Natural killer cell (primary cell): ENCODE measurements at regions of chr1 and their contacts with region 1.

Region 1: GRCh38 chr1:151839457-151840405 is at the start of gene C2CD4D:
- DNase-seq: peak; percentile 49 to 90
- ATAC-seq: peak; percentile 74 to 79 (median 76)
- H3K4me3 ChIP-seq: peak within 1 kb of the TSS; percentile 47
- H3K4me3 Mint-ChIP-seq: peak within 1 kb of the TSS; percentile 86
- H3K27ac ChIP-seq: peak within 1 kb of the TSS; percentile 57
- H3K27ac Mint-ChIP-seq: peak within 1 kb of the TSS; percentile 75 to 85
- H3K4me1 ChIP-seq: peaks cover 42% of the 10 kb centered on the region
- H3K4me1 Mint-ChIP-seq: peaks cover 33 to 40% of the 10 kb centered on the region in 2 donors
- H3K27me3 ChIP-seq: peaks cover 5% of the 10 kb centered on the region
- H3K27me3 Mint-ChIP-seq: peaks cover 3 to 27% of the 10 kb centered on the region in 2 donors
- CTCF ChIP-seq: no peak
- total RNA-seq, gene C2CD4D: 0.20 to 0.24 TPM in 2 of 3 donors, not detected in the other

Region 2: DNA sequence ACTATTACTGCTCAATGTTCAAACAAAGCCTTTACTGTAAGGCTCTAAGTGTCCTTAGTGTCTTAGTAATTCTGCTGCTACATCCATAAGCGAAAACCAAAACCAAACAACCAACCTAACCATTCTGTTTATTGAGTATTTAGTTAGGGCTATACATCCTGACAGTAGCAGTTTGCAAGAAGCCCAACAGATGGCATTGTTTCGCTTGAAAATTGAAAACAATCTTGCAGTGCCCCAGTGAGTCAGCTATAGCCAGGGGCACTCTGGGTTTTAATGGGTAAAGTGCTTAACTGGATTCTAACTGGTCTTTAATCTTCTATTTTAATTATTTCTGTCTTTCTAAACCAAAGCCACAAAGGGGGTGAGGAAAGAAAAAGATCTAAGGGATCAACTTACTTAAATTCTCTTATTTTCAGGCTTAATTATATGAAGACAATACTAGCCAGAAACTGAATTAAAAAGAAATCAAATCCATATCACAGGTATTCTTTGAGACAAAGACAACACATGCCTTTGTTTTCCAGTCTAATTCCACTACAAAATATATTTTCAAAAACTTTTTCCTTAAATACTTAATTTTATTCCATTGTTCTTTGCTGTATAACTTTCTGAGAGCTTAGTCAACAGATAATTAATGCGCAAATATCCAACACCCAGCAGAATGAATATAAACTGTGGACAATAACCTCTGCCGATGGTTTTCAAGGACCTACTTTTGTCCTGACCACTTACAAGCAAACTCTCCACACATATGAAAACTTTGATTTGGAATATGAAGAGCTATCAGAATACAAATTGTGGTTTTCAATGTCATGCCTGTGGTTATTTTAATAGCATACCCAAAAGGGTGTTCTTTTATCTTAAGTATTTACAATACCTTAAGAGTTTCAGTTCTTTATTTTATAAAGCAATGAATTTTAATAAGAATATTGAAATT is 395.6 kb before region 1 on chr1:
- intact Hi-C with region 1: loop called (anchors 2 kb)
- DNase-seq: peak; percentile 48 to 87
- ATAC-seq: peak; percentile 97 to 100 (median 98)
- H3K4me3 ChIP-seq: no peak overlapping the region
- H3K4me3 Mint-ChIP-seq: no peak overlapping the region
- H3K27ac ChIP-seq: no peak overlapping the region
- H3K27ac Mint-ChIP-seq: no peak overlapping the region
- H3K4me1 ChIP-seq: no peaks in the 10 kb centered on the region
- H3K4me1 Mint-ChIP-seq: peaks cover 24 to 25% of the 10 kb centered on the region in 2 donors
- H3K27me3 ChIP-seq: no peaks in the 10 kb centered on the region
- H3K27me3 Mint-ChIP-seq: no peaks in the 10 kb centered on the region
- CTCF ChIP-seq: peak; percentile 82

Region 3: DNA sequence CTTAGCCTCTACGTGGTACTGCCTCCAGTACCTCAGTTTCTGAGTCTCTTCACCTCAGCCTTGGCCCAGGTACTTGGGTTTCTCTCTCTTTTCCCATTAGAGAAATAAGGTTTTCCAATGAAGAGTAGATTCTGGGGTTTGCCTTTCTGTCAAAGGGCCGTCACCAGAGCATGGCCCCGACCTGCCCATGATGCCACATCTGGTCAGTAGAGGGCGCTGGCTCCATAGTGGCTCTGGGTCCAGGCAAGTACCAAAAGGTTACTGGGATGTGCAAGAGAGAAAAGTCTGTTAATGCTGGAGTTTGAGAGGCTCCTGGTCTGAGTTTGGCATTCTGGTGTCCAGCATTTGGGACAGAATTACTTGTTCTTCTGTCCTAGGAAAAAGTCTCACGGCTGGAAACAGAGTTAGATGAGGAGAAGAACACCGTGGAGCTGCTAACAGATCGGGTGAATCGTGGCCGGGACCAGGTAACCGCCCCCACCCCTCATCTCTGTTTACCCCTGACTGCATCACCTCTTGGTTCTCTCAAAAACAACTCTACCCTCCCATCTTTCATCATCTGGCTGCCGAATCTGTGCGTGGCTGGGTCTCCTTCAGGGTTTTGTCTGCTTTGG is 305.0 kb before region 1 on chr1:
- intact Hi-C with region 1: loop called (anchors 5 kb)
- DNase-seq: peak; percentile 66 to 84
- ATAC-seq: peak; percentile 80 to 93 (median 90)
- H3K4me3 ChIP-seq: no peak overlapping the region
- H3K4me3 Mint-ChIP-seq: no peak overlapping the region
- H3K27ac ChIP-seq: no peak overlapping the region
- H3K27ac Mint-ChIP-seq: no peak overlapping the region
- H3K4me1 ChIP-seq: peaks cover 6% of the 10 kb centered on the region
- H3K4me1 Mint-ChIP-seq: peaks cover 0 to 3% of the 10 kb centered on the region in 2 donors
- H3K27me3 ChIP-seq: no peaks in the 10 kb centered on the region
- H3K27me3 Mint-ChIP-seq: no peaks in the 10 kb centered on the region
- CTCF ChIP-seq: peak; percentile 80

Region 4: DNA sequence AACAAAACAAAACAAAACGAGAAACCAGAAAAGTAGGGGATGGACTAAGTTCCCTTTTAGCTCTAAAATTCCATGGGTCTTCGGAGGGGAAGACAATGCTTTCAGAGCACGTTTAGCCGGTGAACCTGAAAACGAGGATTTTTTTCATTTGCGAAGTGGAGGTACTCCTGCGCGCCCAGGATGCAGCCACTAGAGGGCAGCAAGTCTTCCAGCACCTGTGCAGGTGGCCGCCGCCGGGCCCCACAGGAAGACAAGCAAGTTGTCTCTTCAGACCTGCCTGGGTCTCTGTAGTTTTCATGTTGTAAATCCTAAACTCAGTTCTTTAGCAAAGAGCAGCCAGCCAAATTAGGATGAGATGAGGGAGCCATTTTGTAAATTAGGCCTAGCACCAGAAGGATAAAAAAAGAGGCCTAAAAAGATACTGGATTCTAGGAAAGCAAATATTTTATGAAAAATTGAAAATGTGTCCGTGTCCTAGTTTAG is 245.5 kb before region 1 on chr1:
- intact Hi-C with region 1: loop called (anchors 1 kb)
- DNase-seq: peak; percentile 68 to 92
- ATAC-seq: peak; percentile 87 to 99 (median 98)
- H3K4me3 ChIP-seq: no peak overlapping the region
- H3K4me3 Mint-ChIP-seq: peak overlapping the region; percentile 47
- H3K27ac ChIP-seq: no peak overlapping the region
- H3K27ac Mint-ChIP-seq: peak overlapping the region in 1 of 2 donors; percentile 45
- H3K4me1 ChIP-seq: peaks cover 4% of the 10 kb centered on the region
- H3K4me1 Mint-ChIP-seq: peaks cover 7 to 8% of the 10 kb centered on the region in 2 donors
- H3K27me3 ChIP-seq: no peaks in the 10 kb centered on the region
- H3K27me3 Mint-ChIP-seq: peaks cover 11 to 15% of the 10 kb centered on the region in 2 donors
- CTCF ChIP-seq: peak; percentile 95

Region 5: DNA sequence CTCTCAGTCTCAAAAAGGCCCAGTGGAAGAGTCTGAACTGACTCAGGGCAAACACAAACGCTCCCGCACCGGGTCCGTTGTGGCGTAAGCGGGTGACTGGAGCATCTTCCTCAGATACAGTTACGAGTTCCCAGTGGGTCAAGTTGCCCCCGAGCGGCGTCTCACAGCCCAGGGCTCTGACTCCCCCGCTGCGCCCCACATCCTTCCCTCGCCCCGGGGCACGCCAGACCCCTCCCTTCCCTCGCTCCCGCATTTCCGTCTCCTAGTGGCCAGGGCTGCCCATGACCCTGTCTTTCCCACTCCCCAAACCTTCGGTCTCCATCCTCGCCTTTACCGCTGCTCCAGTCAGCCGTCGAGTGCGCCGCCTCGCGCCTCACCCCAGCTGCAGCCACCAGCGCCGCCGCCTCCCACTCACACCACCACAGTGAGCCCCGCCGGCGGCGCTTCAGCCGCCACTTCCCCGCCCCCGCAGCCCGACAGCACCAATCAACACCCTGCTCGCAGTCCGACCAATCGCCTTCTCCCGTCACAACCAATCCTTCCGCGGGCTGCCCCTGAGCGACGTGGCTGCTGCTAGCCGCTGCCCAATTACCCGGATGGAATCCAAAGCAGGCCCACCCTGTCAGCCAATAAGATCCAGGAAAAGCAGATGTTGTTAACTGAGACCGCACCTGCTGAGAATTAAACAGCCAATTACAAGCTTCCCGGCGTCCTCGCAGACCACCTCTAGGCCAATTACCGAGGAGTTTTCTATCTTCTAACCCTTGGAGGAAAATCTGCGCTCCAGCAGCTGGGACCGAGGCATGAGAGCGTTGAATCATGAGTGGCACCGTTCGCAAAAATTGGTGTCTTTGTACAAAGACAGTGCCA is 49.4 kb before region 1 on chr1 and contains the start of gene TDRKH:
- intact Hi-C with region 1: loop called (anchors 1 kb)
- DNase-seq: peak; percentile 96 to 99
- ATAC-seq: peak; percentile 92 to 98 (median 94)
- H3K4me3 ChIP-seq: peak within 1 kb of the TSS; percentile 96
- H3K4me3 Mint-ChIP-seq: peak within 1 kb of the TSS; percentile 100
- H3K27ac ChIP-seq: peak within 1 kb of the TSS; percentile 59
- H3K27ac Mint-ChIP-seq: peak within 1 kb of the TSS; percentile 93 to 94
- H3K4me1 ChIP-seq: peaks cover 9% of the 10 kb centered on the region
- H3K4me1 Mint-ChIP-seq: peaks cover 20 to 34% of the 10 kb centered on the region in 2 donors
- H3K27me3 ChIP-seq: no peaks in the 10 kb centered on the region
- H3K27me3 Mint-ChIP-seq: no peaks in the 10 kb centered on the region
- CTCF ChIP-seq: peak; percentile 17
- total RNA-seq, gene TDRKH: 6.3 to 14.5 (median 8.0) TPM

Region 6: GRCh38 chr1:151800830-151801229 is 38.9 kb before region 1 on chr1:
- intact Hi-C with region 1: no loop called
- DNase-seq: no peak
- ATAC-seq: no peak
- H3K4me3 ChIP-seq: no peak overlapping the region
- H3K4me3 Mint-ChIP-seq: no peak overlapping the region
- H3K27ac ChIP-seq: no peak overlapping the region
- H3K27ac Mint-ChIP-seq: no peak overlapping the region
- H3K4me1 ChIP-seq: peaks cover 9% of the 10 kb centered on the region
- H3K4me1 Mint-ChIP-seq: peaks cover 13 to 15% of the 10 kb centered on the region in 2 donors
- H3K27me3 ChIP-seq: no peaks in the 10 kb centered on the region
- H3K27me3 Mint-ChIP-seq: peaks cover 0 to 5% of the 10 kb centered on the region in 2 donors
- CTCF ChIP-seq: no peak

Region 7: DNA sequence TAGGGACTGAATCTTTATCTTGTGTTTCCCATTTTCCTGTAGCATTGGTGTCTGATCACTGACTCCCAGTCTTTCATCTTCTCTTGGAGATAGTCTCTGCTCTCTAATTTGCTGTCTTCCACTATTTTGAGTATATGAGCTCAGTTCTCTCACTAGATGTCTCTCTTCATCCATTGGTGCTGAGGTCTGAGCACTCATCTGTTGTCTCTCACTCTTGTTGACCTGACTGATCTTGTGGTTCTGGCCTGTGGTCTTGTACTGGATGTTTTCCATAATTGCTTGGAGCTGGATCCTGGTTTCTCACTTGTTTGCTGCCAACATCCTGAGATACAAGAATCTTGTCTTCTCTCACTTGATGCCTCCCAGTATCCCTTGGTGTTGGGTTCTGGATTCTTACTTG is 222.2 kb after region 1 on chr1:
- intact Hi-C with region 1: no loop called
- DNase-seq: no peak
- ATAC-seq: no peak
- H3K4me3 ChIP-seq: no peak overlapping the region
- H3K4me3 Mint-ChIP-seq: no peak overlapping the region
- H3K27ac ChIP-seq: no peak overlapping the region
- H3K27ac Mint-ChIP-seq: no peak overlapping the region
- H3K4me1 ChIP-seq: no peaks in the 10 kb centered on the region
- H3K4me1 Mint-ChIP-seq: no peaks in the 10 kb centered on the region
- H3K27me3 ChIP-seq: peaks cover 18% of the 10 kb centered on the region
- H3K27me3 Mint-ChIP-seq: peaks cover 28 to 29% of the 10 kb centered on the region in 2 donors
- CTCF ChIP-seq: no peak